Caco-2 (cell line): ENCODE measurements at regions of chr2 and their contacts with region 1.

Region 1: DNA sequence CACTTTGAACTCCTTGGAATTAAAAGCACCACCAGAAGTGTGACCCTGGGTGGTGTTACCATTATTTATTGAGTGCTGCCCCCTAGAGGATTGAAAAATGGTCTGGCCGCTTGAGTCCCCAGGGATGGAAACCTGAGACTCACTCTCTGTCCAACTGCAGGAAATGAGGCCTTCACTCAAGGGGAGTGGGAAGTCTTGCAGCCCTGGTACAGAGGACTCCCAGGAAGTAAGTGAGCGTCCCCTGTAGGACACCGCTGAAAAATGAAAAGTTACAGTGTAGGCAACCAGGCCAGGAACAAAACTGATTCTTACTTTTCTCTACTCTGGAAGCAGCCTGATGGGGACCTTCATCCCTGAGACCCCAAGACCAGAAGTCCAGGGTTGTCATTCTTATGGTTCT is 2.2 kb upstream of the NRP2 start:
- DNase-seq: peak; percentile 80
- H3K4me3 ChIP-seq: no peak overlapping the region
- H3K4me3 Mint-ChIP-seq: no peak overlapping the region
- H3K27ac Mint-ChIP-seq: peak overlapping the region; percentile 24
- H3K4me1 ChIP-seq: peaks cover 62% of the 10 kb centered on the region
- H3K4me1 Mint-ChIP-seq: peaks cover 45% of the 10 kb centered on the region
- H3K27me3 ChIP-seq: no peaks in the 10 kb centered on the region
- H3K27me3 Mint-ChIP-seq: no peaks in the 10 kb centered on the region
- CTCF ChIP-seq: peak; percentile 57 to 61

Region 2: DNA sequence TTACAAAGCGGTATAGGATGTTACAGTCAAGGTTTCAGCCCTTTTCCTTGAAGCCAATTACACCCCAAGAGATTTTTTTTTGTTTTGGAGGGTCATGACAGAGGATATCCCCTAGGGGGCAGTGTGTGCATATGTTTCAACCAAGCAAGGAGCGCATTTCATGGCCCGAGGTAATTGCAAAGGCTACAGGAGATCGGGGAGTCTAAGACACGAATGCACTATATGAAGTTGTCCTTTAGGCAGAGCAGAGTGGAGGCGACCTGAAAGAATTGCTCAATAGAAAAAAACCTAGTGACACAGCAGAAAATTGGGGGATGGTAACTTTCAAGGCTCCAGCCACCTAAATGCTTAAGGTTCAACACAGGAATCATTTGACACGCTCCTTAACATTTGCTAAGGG is 1354.6 kb before region 1 on chr2:
- CTCF ChIA-PET with region 1: no interaction called
- POLR2A ChIA-PET with region 1: no interaction called
- intact Hi-C with region 1: loop called (anchors 1 kb)
- DNase-seq: peak; percentile 89 to 90
- H3K4me3 ChIP-seq: no peak overlapping the region
- H3K4me3 Mint-ChIP-seq: no peak overlapping the region
- H3K27ac Mint-ChIP-seq: peak overlapping the region; percentile 56
- H3K4me1 ChIP-seq: peaks cover 4% of the 10 kb centered on the region
- H3K4me1 Mint-ChIP-seq: peaks cover 28% of the 10 kb centered on the region
- H3K27me3 ChIP-seq: no peaks in the 10 kb centered on the region
- H3K27me3 Mint-ChIP-seq: no peaks in the 10 kb centered on the region
- CTCF ChIP-seq: peak; percentile 76 to 89

Region 3: GRCh38 chr2:204948024-204948763 is 731.9 kb before region 1 on chr2:
- CTCF ChIA-PET with region 1: no interaction called
- POLR2A ChIA-PET with region 1: no interaction called
- intact Hi-C with region 1: loop called (anchors 5 kb)
- DNase-seq: no peak
- H3K4me3 ChIP-seq: no peak overlapping the region
- H3K4me3 Mint-ChIP-seq: peak overlapping the region; percentile 8
- H3K27ac Mint-ChIP-seq: peak overlapping the region; percentile 61
- H3K4me1 ChIP-seq: peaks cover 41% of the 10 kb centered on the region
- H3K4me1 Mint-ChIP-seq: peaks cover 42% of the 10 kb centered on the region
- H3K27me3 ChIP-seq: no peaks in the 10 kb centered on the region
- H3K27me3 Mint-ChIP-seq: no peaks in the 10 kb centered on the region
- CTCF ChIP-seq: no peak

Region 4: GRCh38 chr2:205323929-205324328 is 356.1 kb before region 1 on chr2:
- CTCF ChIA-PET with region 1: interaction called, 3 read pairs
- POLR2A ChIA-PET with region 1: no interaction called
- intact Hi-C with region 1: loop called (anchors 5 kb)
- DNase-seq: no peak
- H3K4me3 ChIP-seq: no peak overlapping the region
- H3K4me3 Mint-ChIP-seq: no peak overlapping the region
- H3K27ac Mint-ChIP-seq: no peak overlapping the region
- H3K4me1 ChIP-seq: peaks cover 6% of the 10 kb centered on the region; the same call in 1 of the 2 replicates
- H3K4me1 Mint-ChIP-seq: peaks cover 14% of the 10 kb centered on the region
- H3K27me3 ChIP-seq: no peaks in the 10 kb centered on the region
- H3K27me3 Mint-ChIP-seq: no peaks in the 10 kb centered on the region
- CTCF ChIP-seq: peak; percentile 30 to 32

Region 5: DNA sequence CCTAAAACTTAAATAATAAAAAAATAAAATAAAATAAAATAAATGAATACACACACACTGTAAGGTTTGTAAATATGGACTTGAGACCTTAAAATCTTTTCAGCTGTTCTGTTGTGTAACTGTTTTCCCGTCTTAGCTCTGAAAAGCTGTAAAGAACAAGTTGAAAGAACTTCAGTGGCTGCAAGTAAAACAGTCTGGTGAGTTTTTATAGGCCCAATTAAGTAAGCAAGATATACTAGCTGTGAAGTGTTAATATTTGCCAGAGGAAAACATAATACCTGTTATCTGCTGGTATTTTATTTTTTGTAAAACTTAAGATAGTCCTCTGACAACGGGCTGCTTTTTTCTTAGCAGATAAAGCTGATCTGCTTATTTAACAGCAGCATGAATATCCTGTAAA is 174.7 kb before region 1 on chr2:
- CTCF ChIA-PET with region 1: interaction called, 5 read pairs
- POLR2A ChIA-PET with region 1: interaction called, 6 read pairs
- intact Hi-C with region 1: loop called (anchors 1 kb)
- DNase-seq: peak in 1 of 2 experiments; percentile 62
- H3K4me3 ChIP-seq: no peak overlapping the region
- H3K4me3 Mint-ChIP-seq: no peak overlapping the region
- H3K27ac Mint-ChIP-seq: peak overlapping the region; percentile 45
- H3K4me1 ChIP-seq: peaks cover 26% of the 10 kb centered on the region
- H3K4me1 Mint-ChIP-seq: peaks cover 39% of the 10 kb centered on the region
- H3K27me3 ChIP-seq: no peaks in the 10 kb centered on the region
- H3K27me3 Mint-ChIP-seq: no peaks in the 10 kb centered on the region
- CTCF ChIP-seq: no peak

Region 6: DNA sequence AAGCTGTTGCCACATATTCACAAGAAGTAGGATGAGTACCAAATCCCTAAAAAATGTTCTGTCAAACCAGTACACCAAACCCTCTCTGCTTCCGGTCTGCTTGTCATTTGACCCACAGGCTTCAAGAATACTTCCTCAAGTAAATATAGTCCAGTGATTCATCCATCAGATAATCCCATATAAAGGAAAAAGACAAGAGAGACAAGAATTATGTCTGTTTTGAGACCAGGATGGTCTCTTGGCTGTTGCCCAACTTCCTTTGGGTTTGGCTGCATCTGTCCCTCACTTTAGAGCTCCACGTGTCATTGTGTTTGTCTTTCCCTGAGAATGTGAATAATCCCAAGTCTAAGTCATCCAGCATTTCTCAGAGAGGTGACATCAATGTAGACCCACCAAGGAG is 89.3 kb before region 1 on chr2:
- CTCF ChIA-PET with region 1: no interaction called
- POLR2A ChIA-PET with region 1: no interaction called
- intact Hi-C with region 1: no loop called
- DNase-seq: no peak
- H3K4me3 ChIP-seq: no peak overlapping the region
- H3K4me3 Mint-ChIP-seq: no peak overlapping the region
- H3K27ac Mint-ChIP-seq: no peak overlapping the region
- H3K4me1 ChIP-seq: no peaks in the 10 kb centered on the region
- H3K4me1 Mint-ChIP-seq: no peaks in the 10 kb centered on the region
- H3K27me3 ChIP-seq: no peaks in the 10 kb centered on the region
- H3K27me3 Mint-ChIP-seq: no peaks in the 10 kb centered on the region
- CTCF ChIP-seq: no peak

Region 7: GRCh38 chr2:205696331-205696923 is 16.4 kb after region 1 on chr2:
- CTCF ChIA-PET with region 1: interaction called, 3 read pairs
- POLR2A ChIA-PET with region 1: interaction called, 4 read pairs
- intact Hi-C with region 1: loop called (anchors 2 kb)
- DNase-seq: peak; percentile 81 to 85
- H3K4me3 ChIP-seq: no peak overlapping the region
- H3K4me3 Mint-ChIP-seq: no peak overlapping the region
- H3K27ac Mint-ChIP-seq: peak overlapping the region; percentile 43
- H3K4me1 ChIP-seq: peaks cover 57% of the 10 kb centered on the region
- H3K4me1 Mint-ChIP-seq: peaks cover 50% of the 10 kb centered on the region
- H3K27me3 ChIP-seq: no peaks in the 10 kb centered on the region
- H3K27me3 Mint-ChIP-seq: no peaks in the 10 kb centered on the region
- CTCF ChIP-seq: peak; percentile 60 to 85